GM12878 (cell line): ENCODE measurements at regions of chr2 and their contacts with region 1.

Region 1: GRCh38 chr2:102020596-102021181 is 28.9 kb downstream of the IL1R2 start:
- DNase-seq: no peak
- ATAC-seq: peak; percentile 80
- H3K4me3 ChIP-seq: no peak overlapping the region
- H3K27ac ChIP-seq: no peak overlapping the region
- H3K4me1 ChIP-seq: peaks cover 7% of the 10 kb centered on the region
- H3K27me3 ChIP-seq: no peaks in the 10 kb centered on the region
- CTCF ChIP-seq: peak; percentile 93 to 98 (median 97); a peak in 5 of 6 replicates
- EP300 ChIP-seq: no peak
- POLR2A ChIP-seq: no peak
- RAD21 ChIP-seq: peak; percentile 92

Region 2: GRCh38 chr2:101328474-101329007 is 692.1 kb before region 1 on chr2:
- CTCF ChIA-PET with region 1: no interaction called
- POLR2A ChIA-PET with region 1: no interaction called
- RAD21 ChIA-PET with region 1: no interaction called
- SMC1A ChIA-PET with region 1: no interaction called
- in situ Hi-C with region 1: no loop called
- intact Hi-C with region 1: no loop called
- DNase-seq: peak; percentile 11
- ATAC-seq: no peak
- H3K4me3 ChIP-seq: no peak overlapping the region
- H3K27ac ChIP-seq: no peak overlapping the region
- H3K4me1 ChIP-seq: no peaks in the 10 kb centered on the region; the same call in 1 of the 2 replicates
- H3K27me3 ChIP-seq: no peaks in the 10 kb centered on the region; a peak in 1 of 4 replicates
- CTCF ChIP-seq: no peak
- EP300 ChIP-seq: no peak
- POLR2A ChIP-seq: no peak
- RAD21 ChIP-seq: no peak

Region 3: GRCh38 chr2:101912545-101912944 is 108.1 kb before region 1 on chr2:
- CTCF ChIA-PET with region 1: no interaction called
- POLR2A ChIA-PET with region 1: no interaction called
- RAD21 ChIA-PET with region 1: no interaction called
- SMC1A ChIA-PET with region 1: no interaction called
- in situ Hi-C with region 1: no loop called
- intact Hi-C with region 1: no loop called
- DNase-seq: peak; percentile 41
- ATAC-seq: peak; percentile 99
- H3K4me3 ChIP-seq: no peak overlapping the region
- H3K27ac ChIP-seq: no peak overlapping the region
- H3K4me1 ChIP-seq: peaks cover 5% of the 10 kb centered on the region
- H3K27me3 ChIP-seq: no peaks in the 10 kb centered on the region
- CTCF ChIP-seq: no peak
- EP300 ChIP-seq: peak in 1 of 2 experiments; percentile 60; a peak in 1 of 4 replicates
- POLR2A ChIP-seq: no peak
- RAD21 ChIP-seq: no peak

Region 4: GRCh38 chr2:102005989-102006885 is 14.5 kb before region 1 on chr2:
- CTCF ChIA-PET with region 1: interaction called, 76 read pairs
- POLR2A ChIA-PET with region 1: interaction called, 5 read pairs
- RAD21 ChIA-PET with region 1: interaction called, 23 read pairs
- SMC1A ChIA-PET with region 1: interaction called, 39 read pairs
- in situ Hi-C with region 1: no loop called
- intact Hi-C with region 1: no loop called
- DNase-seq: no peak
- ATAC-seq: peak; percentile 82
- H3K4me3 ChIP-seq: no peak overlapping the region
- H3K27ac ChIP-seq: no peak overlapping the region
- H3K4me1 ChIP-seq: peaks cover 3% of the 10 kb centered on the region; the same call in 1 of the 2 replicates
- H3K27me3 ChIP-seq: no peaks in the 10 kb centered on the region; a peak in 1 of 4 replicates
- CTCF ChIP-seq: peak; percentile 63 to 73 (median 69)
- EP300 ChIP-seq: no peak
- POLR2A ChIP-seq: no peak
- RAD21 ChIP-seq: peak; percentile 51

Region 5: GRCh38 chr2:102057502-102058292 is 37.0 kb after region 1 on chr2:
- CTCF ChIA-PET with region 1: interaction called, 28 read pairs
- POLR2A ChIA-PET with region 1: interaction called, 16 read pairs
- RAD21 ChIA-PET with region 1: interaction called, 77 read pairs
- SMC1A ChIA-PET with region 1: interaction called, 97 read pairs
- in situ Hi-C with region 1: no loop called
- intact Hi-C with region 1: loop called (anchors 1 kb)
- DNase-seq: peak; percentile 65
- ATAC-seq: peak; percentile 92
- H3K4me3 ChIP-seq: no peak overlapping the region
- H3K27ac ChIP-seq: no peak overlapping the region
- H3K4me1 ChIP-seq: no peaks in the 10 kb centered on the region
- H3K27me3 ChIP-seq: no peaks in the 10 kb centered on the region; a peak in 1 of 4 replicates
- CTCF ChIP-seq: no peak
- EP300 ChIP-seq: peak; percentile 66 to 91; a peak in 3 of 4 replicates
- POLR2A ChIP-seq: no peak
- RAD21 ChIP-seq: no peak

Region 6: DNA sequence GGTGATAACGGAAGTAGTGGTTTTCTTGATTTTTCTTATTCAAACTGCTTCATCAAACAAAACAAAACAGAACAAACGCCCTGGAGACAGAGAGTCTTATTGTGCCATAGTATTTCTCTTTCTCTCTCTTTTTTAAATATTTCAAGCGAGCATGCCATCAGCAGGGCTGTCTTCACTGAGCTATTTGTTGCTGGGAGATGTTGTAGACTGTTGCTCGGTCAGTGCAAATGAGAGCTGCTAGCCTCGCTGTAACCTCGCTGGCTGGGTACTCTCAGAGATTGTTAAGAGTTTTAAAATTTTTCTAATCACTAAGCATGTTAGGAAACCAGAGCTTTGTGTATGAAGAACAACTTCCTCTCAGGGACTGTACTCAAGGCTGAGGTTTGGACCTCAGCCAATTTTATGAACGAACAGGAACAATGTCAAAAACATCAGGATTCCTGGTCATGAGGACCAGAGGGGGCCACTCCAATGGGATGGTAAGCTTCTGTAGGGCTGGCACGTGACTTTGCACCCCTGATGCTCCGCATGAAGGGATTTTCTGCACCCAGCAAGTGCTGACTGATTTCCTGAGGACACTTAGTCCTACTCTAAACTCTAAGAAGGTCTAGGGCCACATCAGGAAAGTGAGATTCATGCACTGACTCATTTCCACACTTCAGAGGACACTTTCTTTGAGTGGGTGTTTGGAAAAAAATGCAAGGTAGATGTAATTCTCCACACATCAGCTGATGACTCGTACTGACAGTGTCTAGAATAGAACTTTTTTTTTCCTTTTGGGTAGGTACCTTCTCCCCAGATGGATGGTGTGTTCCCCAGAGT is 62.1 kb after region 1 on chr2:
- CTCF ChIA-PET with region 1: interaction called, 9 read pairs
- POLR2A ChIA-PET with region 1: interaction called, 17 read pairs
- RAD21 ChIA-PET with region 1: interaction called, 53 read pairs
- SMC1A ChIA-PET with region 1: interaction called, 108 read pairs
- in situ Hi-C with region 1: no loop called
- intact Hi-C with region 1: loop called (anchors 1 kb)
- DNase-seq: peak; percentile 88
- ATAC-seq: peak; percentile 83
- H3K4me3 ChIP-seq: no peak overlapping the region
- H3K27ac ChIP-seq: peak overlapping the region; percentile 59
- H3K4me1 ChIP-seq: peaks cover 31% of the 10 kb centered on the region
- H3K27me3 ChIP-seq: no peaks in the 10 kb centered on the region
- CTCF ChIP-seq: no peak
- EP300 ChIP-seq: peak; percentile 71 to 96
- POLR2A ChIP-seq: no peak
- RAD21 ChIP-seq: no peak

Region 7: GRCh38 chr2:102166189-102166845 is 145.6 kb after region 1 on chr2:
- CTCF ChIA-PET with region 1: interaction called, 53 read pairs
- POLR2A ChIA-PET with region 1: interaction called, 3 read pairs
- RAD21 ChIA-PET with region 1: interaction called, 23 read pairs
- SMC1A ChIA-PET with region 1: interaction called, 25 read pairs
- in situ Hi-C with region 1: no loop called
- intact Hi-C with region 1: loop called (anchors 5 kb)
- DNase-seq: no peak
- ATAC-seq: no peak
- H3K4me3 ChIP-seq: no peak overlapping the region
- H3K27ac ChIP-seq: no peak overlapping the region
- H3K4me1 ChIP-seq: no peaks in the 10 kb centered on the region
- H3K27me3 ChIP-seq: no peaks in the 10 kb centered on the region
- CTCF ChIP-seq: peak in 1 of 3 experiments; percentile 37; a peak in 2 of 6 replicates
- EP300 ChIP-seq: no peak
- POLR2A ChIP-seq: no peak
- RAD21 ChIP-seq: 0 out of 2 replicates have a peak, but pooled peaks have one; percentile 11

Region 8: DNA sequence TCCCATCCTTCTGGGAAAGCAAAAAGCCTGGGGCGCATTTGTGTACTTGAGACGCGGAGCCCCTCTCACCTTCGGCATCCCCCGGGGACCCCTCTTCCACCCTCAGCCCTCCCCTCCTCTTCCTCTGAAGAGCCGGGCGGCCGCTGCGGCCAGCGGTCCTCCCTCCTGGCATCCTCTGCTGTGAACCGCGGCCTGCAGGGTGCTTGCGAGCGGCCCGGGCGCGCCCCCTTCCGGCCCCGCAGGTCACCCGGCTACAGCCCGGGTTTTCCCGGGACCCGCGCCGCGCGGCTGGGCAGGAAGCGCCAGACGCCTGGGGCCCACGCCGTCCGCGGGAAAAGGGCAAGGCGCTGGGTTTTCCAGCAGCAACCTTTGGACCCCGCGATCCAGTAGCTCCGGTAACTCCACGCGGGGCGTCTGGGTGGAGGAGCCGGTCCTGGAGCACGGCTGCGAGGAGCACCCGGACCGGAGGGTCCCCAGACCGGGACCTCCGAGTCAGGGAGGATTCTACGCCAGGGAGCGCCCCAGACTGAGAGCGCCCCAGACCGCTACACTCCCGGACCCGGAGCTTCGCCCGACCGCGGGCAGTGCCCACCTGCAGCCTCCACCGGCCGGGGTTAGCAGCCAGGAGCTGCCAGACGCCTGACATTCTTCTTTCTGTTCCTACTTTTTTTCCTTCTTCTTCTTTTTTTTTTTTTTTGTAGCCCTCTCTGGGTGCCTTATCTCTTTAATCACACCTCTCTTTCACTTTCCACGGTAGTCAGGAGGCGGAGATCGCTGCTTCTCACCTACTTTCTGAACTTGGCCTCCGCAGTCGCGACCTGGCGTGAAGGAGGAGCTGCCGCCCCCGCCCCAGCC is 335.1 kb after region 1 on chr2 and contains the start of gene IL18R1:
- CTCF ChIA-PET with region 1: interaction called, 3 read pairs
- POLR2A ChIA-PET with region 1: no interaction called
- RAD21 ChIA-PET with region 1: interaction called, 6 read pairs
- SMC1A ChIA-PET with region 1: interaction called, 3 read pairs
- in situ Hi-C with region 1: no loop called
- intact Hi-C with region 1: loop called (anchors 1 kb)
- DNase-seq: peak; percentile 42
- ATAC-seq: peak; percentile 88
- H3K4me3 ChIP-seq: peak within 1 kb of the TSS; percentile 96
- H3K27ac ChIP-seq: peak within 1 kb of the TSS; percentile 91
- H3K4me1 ChIP-seq: peaks cover 4% of the 10 kb centered on the region
- H3K27me3 ChIP-seq: no peaks in the 10 kb centered on the region
- CTCF ChIP-seq: peak; percentile 72 to 91 (median 82)
- EP300 ChIP-seq: no peak
- POLR2A ChIP-seq: no peak
- RAD21 ChIP-seq: peak; percentile 76
- polyA plus RNA-seq, gene IL18R1: 3.5 to 3.8 TPM

Region 9: DNA sequence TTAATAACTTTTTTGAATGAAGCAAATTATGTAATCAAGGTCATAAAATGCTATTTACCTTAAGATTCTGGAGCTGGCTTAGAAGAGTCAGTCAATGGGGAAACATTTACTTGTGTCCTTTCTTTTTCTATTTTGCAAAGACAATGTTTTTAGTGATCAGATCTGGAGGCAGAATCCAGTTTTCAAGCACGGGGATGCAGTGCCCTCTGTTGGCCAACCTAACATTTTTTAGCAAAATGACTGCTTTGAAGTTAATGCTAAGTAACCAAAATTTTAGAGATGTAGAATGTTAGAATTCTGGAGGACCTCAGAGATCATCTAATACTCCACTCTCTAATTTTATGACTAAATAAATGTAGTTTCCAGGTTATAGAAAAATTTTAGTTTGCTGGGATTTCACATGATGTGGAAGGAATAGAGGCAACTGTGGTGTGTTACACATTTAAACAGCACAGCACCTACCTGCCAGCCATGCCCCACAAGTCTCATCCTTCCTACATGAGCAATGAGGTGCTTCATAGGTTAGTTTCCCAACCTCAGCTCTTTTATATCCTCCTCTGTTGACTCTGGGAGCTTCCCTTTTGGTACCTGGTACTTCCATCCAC is 428.8 kb after region 1 on chr2:
- CTCF ChIA-PET with region 1: interaction called, 15 read pairs
- POLR2A ChIA-PET with region 1: no interaction called
- RAD21 ChIA-PET with region 1: interaction called, 5 read pairs
- SMC1A ChIA-PET with region 1: interaction called, 3 read pairs
- in situ Hi-C with region 1: loop called (anchors 5 kb)
- intact Hi-C with region 1: loop called (anchors 2 kb)
- DNase-seq: no peak
- ATAC-seq: peak; percentile 78
- H3K4me3 ChIP-seq: no peak overlapping the region
- H3K27ac ChIP-seq: no peak overlapping the region
- H3K4me1 ChIP-seq: no peaks in the 10 kb centered on the region
- H3K27me3 ChIP-seq: no peaks in the 10 kb centered on the region
- CTCF ChIP-seq: peak; percentile 49 to 79 (median 58); a peak in 5 of 6 replicates
- EP300 ChIP-seq: no peak
- POLR2A ChIP-seq: no peak
- RAD21 ChIP-seq: peak; percentile 87